ENCODE measurements at regions of chr4 and their contacts with region 1.

Region 1: GRCh38 chr4:24840821-24841587 is 45.6 kb downstream of the SOD3 start:
- DNase-seq: no peak
- H3K4me3 ChIP-seq: no peak overlapping the region
- CTCF ChIP-seq: peak; percentile 13

Region 2: GRCh38 chr4:24743931-24744330 is 97.1 kb before region 1 on chr4:
- in situ Hi-C with region 1: no loop called
- DNase-seq: no peak
- H3K4me3 ChIP-seq: no peak overlapping the region
- CTCF ChIP-seq: no peak

Region 3: DNA sequence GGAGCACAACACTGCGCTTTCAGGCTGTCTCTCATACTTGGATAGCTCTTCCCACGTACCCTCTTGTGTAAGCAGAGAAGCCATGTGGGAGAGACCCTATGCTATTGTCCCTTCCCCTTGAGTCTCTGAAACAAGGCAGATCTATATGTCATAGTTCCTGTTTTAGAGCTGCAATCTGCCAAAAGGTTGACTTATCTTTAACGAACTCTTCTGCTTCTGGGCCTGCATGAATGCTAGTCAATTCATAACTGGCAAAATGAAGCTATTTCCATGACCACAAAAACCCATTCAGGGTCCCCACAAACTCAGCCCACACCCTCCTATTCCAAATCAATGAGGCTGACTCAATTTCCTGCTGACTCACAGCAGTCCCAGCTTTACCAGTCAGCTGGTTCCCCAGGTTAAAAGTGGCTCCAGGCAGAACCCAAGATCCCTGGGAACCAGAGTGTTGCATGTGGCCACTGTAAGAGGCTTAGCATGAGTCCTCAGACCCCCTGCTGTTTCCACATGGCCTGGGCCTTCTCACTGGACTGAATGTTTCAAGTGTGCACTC is 70.9 kb before region 1 on chr4:
- in situ Hi-C with region 1: loop called (anchors 5 kb)
- DNase-seq: peak; percentile 86
- H3K4me3 ChIP-seq: no peak overlapping the region
- CTCF ChIP-seq: no peak

Region 4: DNA sequence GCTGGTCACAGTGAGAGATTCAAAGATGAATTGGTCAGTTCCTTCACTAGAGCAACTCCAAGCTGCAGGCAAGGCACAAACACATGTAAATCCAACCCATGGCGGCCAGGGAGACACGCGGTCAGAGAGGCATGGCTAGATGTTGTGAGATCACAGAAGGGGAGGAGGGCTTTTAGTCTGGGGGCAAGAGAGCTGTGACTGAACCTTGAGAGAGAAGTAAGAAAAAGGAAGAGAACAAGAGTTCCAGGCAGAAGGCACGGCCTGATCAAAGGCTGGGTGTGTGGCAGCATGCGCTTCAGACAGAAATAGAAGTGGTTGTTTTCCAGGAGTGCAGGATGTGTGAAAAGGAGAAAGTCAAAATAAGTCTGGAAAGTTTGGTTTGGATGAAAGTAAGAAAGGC is 56.0 kb after region 1 on chr4:
- in situ Hi-C with region 1: no loop called
- DNase-seq: no peak
- H3K4me3 ChIP-seq: no peak overlapping the region
- CTCF ChIP-seq: no peak